Mammary epithelial cell (primary cell): ENCODE measurements at regions of chr2 and their contacts with region 1.

Region 1: DNA sequence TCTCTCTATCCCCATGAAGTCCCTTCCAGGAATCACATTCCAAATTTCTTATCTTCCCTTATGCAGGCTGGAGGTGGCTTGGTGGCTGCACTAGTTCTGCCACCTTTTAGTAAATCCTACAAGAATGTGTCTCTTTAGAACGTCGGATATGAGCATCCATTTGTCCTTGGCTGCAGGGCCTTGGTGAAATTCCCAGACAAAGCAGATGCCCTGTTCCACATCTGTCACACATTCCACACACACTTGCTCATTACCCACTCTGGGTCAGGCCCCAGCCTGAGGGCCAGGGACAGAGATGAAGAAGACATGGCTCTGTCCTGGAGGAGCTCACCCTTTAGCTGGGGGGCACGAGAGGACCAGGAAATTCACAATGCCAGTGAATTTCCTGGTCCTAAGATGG is 31.2 kb upstream of the GPR17 start:
- DNase-seq: peak; percentile 12
- H3K4me3 ChIP-seq: no peak overlapping the region
- H3K27ac ChIP-seq: no peak overlapping the region
- H3K4me1 ChIP-seq: peaks cover 2% of the 10 kb centered on the region
- H3K27me3 ChIP-seq: no peaks in the 10 kb centered on the region
- CTCF ChIP-seq: no peak

Region 2: GRCh38 chr2:127508631-127509034 is 106.1 kb before region 1 on chr2:
- CTCF ChIA-PET with region 1: no interaction called
- dilution Hi-C with region 1: no loop called
- in situ Hi-C with region 1: no loop called
- intact Hi-C with region 1: no loop called
- DNase-seq: peak; percentile 99
- H3K4me3 ChIP-seq: no peak overlapping the region
- H3K27ac ChIP-seq: peak overlapping the region; percentile 68
- H3K4me1 ChIP-seq: peaks cover 16% of the 10 kb centered on the region
- H3K27me3 ChIP-seq: no peaks in the 10 kb centered on the region
- CTCF ChIP-seq: no peak

Region 3: DNA sequence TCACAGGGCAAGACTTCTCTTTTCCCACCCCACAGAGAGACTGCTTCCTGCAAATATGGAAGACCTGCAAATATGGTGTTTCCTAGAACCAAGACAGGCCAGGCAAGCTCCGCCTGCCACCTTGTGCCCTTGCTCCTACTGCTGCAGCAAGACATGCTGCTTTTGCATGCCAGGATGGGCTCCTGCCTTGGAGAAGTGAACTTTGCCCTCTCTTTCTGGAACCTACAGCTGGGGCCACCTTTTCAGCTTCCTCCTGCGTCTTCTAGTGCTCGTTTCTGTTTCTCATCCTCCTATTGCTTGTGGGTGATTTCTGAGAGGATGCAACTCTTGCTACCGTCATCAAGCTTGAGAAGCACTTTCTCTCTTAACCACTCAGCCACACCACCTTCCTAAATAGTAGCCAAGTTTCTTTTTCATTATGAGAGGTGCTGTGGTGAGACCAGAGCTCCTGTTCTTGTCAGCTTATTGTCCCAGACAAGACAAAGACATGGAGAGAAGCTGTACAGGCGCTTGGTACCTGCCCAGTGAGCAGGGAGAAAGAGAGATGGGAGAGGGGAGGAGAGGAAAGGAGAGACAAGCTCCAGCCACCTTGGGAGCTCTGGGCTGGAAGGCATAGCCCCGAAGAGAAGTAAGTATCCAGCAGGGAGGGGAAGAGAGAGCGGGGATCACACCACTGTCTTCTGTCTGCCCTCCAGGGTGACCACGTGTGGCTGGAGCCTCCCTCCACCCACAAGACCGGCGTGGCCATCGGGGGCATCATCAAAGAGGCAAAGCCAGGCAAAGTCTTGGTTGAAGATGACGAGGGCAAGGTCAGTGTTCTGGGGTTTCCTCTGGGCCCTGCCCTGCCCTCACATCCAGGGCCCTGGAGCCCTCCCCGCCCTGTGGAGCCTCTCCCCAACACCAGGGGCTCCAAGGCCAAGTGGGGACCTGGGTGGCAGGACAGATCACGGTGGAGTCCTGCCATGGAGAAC is 51.0 kb before region 1 on chr2:
- CTCF ChIA-PET with region 1: no interaction called
- dilution Hi-C with region 1: loop called (anchors 5 kb)
- in situ Hi-C with region 1: no loop called
- intact Hi-C with region 1: no loop called
- DNase-seq: no peak
- H3K4me3 ChIP-seq: no peak overlapping the region
- H3K27ac ChIP-seq: no peak overlapping the region
- H3K4me1 ChIP-seq: no peaks in the 10 kb centered on the region
- H3K27me3 ChIP-seq: peaks cover 4% of the 10 kb centered on the region
- CTCF ChIP-seq: no peak